HEK293 (cell line): ENCODE measurements at regions of chr14 and their contacts with region 1.

Region 1: DNA sequence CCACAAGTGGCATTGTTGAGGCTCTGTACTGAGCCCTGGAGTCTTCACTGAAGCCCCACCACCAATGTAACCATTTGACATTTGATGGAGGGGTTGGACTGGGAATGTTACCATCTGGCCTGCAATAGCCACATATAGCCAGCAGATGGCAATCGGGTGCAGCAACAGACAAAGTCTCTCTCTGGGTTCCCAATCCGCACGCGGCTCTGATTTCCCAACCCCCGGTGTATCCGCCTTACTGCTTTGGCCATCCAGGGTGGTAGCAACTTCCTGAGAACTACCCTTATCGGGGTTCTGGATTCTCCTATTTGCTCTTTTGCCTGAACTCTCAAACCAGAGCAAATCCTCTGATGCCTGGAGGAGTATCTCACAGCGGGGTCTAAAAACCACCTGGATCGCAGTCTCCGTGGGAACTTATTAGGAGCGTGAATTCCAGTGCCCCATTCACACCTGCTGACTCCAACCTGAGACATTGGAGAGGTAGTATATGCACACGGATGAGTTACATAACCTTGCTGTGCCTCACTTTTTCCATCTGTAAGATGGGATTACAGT is 14.2 kb downstream of the VRTN start:
- H3K4me3 ChIP-seq: no peak overlapping the region
- H3K27ac ChIP-seq: no peak overlapping the region
- H3K4me1 ChIP-seq: no peaks in the 10 kb centered on the region
- CTCF ChIP-seq: peak; percentile 74

Region 2: DNA sequence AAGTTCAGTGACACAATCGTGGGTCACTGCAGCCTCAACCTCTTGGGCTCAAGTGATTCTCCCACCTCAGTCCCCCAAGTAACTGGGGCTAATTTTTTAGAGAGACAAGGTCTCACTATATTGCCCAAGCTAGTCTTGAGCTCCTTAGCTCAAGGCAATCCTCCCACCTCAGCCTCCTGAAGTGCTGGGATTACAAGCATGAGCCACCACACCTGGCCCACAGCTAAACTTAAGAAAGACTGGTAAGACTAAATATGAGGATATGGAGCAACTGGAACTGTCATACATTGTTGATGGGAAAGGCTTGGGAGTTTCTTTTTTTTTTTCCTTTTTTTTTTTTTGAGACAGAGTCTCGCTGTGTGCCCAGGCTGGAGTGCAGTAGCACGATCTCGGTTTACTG is 19.8 kb after region 1 on chr14:
- CTCF ChIA-PET with region 1: no interaction called
- POLR2A ChIA-PET with region 1: no interaction called
- H3K4me3 ChIP-seq: no peak overlapping the region
- H3K27ac ChIP-seq: no peak overlapping the region
- H3K4me1 ChIP-seq: no peaks in the 10 kb centered on the region
- CTCF ChIP-seq: no peak

Region 3: GRCh38 chr14:74478996-74479635 is 116.7 kb after region 1 on chr14:
- CTCF ChIA-PET with region 1: interaction called, 29 read pairs
- POLR2A ChIA-PET with region 1: no interaction called
- H3K4me3 ChIP-seq: no peak overlapping the region
- H3K27ac ChIP-seq: no peak overlapping the region
- H3K4me1 ChIP-seq: no peaks in the 10 kb centered on the region
- CTCF ChIP-seq: peak; percentile 61

Region 4: GRCh38 chr14:74501135-74501614 is 138.7 kb after region 1 on chr14:
- CTCF ChIA-PET with region 1: no interaction called
- POLR2A ChIA-PET with region 1: no interaction called
- H3K4me3 ChIP-seq: no peak overlapping the region
- H3K27ac ChIP-seq: no peak overlapping the region
- H3K4me1 ChIP-seq: no peaks in the 10 kb centered on the region
- CTCF ChIP-seq: no peak